Vagina (tissue), 2 donors: ENCODE measurements at regions of chr5 and their contacts with region 1.

Region 1: GRCh38 chr5:59188419-59189225 is 605.7 kb downstream of the RAB3C start:
- DNase-seq: no peak
- H3K4me3 ChIP-seq: peak overlapping the region in 1 of 2 donors; percentile 21
- H3K27ac ChIP-seq: no peak overlapping the region
- H3K4me1 ChIP-seq: no peaks in the 10 kb centered on the region
- H3K27me3 ChIP-seq: no peaks in the 10 kb centered on the region
- CTCF ChIP-seq: peak; percentile 41 to 81 (median 78)
- POLR2A ChIP-seq: no peak

Region 2: DNA sequence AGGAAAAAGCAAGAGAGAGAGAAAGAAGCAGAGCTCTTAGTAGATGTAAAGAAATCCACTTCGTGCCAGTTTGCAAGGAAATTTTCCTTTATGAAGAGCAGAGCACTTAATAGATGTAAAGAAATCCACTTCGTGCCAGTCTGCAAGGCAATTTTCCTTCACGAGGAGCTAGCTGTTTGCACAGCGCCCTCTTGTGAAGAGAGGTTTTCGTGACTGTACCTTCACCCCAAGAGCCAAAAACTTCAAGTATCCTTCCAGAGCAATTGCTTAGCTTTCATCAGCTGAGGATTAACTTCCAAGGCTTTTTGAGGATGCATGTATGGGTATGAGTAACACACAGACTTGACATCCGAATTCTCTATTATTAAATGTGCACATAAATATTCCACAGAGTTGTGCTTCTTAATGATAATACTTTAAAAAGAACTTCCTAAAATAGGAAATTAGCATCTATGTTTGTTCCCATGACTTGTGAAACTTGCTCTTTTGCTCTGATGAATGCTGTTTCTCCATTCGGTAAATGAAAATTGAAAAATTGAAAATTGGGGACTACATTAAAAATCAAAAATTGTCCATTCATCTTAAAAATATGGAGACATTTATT is 179.3 kb after region 1 on chr5:
- intact Hi-C with region 1: loop called (anchors 5 kb)
- DNase-seq: no peak
- H3K4me3 ChIP-seq: no peak overlapping the region
- H3K27ac ChIP-seq: no peak overlapping the region
- H3K4me1 ChIP-seq: no peaks in the 10 kb centered on the region
- H3K27me3 ChIP-seq: no peaks in the 10 kb centered on the region
- CTCF ChIP-seq: peak; percentile 21 to 80 (median 59)
- POLR2A ChIP-seq: no peak